HepG2 (cell line): ENCODE measurements at regions of chr1 and their contacts with region 1.

Region 1: DNA sequence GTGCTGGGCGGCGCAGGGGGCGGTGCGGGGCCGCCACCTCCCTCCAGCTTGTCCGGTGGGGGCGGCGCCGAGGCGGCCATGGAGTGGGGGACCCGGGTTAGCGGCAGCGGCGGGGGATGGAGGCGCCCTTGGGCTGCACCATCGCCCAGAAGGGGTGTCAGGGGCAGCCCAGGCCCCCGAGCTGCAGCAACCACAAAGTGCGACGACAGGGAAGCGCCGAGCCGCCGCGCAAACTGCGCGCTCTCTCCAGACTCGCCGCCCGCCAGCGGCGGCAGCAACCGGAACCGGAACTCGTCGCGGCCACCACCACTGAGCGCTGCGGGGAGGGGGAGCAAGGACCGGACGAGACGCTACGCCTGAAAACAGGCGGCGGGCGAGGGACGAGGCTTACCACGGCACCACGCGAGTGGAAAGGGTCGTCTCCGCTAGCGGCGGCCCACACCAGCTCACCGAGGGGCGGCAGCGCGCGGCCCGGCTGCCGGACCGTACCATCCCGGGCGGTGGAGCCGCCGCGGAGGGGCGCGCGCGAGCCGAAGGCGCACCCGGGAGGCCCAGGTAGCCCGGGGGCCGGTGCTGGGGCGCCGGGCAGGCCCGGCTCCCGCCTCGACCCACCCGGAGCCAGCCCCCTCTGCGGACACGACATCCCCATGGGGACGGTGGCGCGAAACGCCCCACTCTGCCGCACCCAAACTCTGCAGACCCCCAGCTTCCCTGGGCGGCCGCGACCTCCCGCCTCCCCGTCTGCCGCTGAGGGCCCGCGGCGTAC is at the start of gene PYGO2:
- DNase-seq: peak; percentile 48
- ATAC-seq: peak; percentile 87
- H3K4me3 ChIP-seq: peak within 1 kb of the TSS; percentile 72 to 87 (median 80)
- H3K27ac ChIP-seq: peak within 1 kb of the TSS; percentile 96
- H3K4me1 ChIP-seq: peaks cover 48% of the 10 kb centered on the region
- H3K27me3 ChIP-seq: no peaks in the 10 kb centered on the region; a peak in 1 of 5 replicates
- CTCF ChIP-seq: peak; percentile 75
- EP300 ChIP-seq: 0 out of 4 replicates have a peak, but pooled peaks of 1 of the 2 experiments have one; percentile 3
- POLR2A ChIP-seq: peak; percentile 72 to 84
- RAD21 ChIP-seq: peak; percentile 95
- total RNA-seq, gene PYGO2: 20.3 and 21.3 TPM in 2 replicates

Region 2: DNA sequence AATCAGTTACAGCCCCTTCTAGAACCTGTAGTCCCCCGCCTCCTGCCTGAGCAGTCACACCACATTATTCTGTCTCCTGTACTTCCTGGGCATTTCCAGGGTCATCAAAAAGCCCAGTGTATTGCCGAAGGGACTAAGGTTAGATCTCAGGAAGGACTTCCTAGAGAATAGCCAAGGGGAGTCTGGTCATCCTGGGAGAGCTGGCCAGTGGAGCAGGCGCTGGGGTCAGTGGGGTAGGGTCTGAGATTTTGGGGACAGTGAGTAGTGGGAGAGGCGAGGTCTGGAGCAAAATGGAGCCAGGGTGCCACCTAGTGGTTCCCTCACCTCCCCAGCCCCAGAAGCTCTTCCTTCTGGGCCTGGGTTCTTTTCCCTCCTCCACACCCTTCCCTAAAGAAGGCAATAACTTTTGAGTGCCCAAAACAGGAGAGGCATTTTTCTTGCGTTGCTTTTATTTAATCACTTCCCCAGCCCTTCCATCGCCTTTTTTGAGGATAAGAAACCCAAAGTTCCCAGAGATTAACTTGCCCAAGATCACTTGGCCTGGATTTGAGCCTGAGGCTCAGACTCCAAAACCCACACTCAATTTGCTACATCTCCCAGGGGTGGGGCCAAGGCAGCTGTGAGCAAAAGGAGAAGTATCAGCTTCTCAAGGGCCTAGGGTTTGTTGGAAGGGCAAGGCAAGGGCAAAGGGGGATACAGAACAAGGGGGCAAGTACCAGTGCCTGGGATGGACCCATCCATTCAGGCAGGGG is 17.9 kb before region 1 on chr1:
- CTCF ChIA-PET with region 1: no interaction called
- POLR2A ChIA-PET with region 1: interaction called, 22 read pairs
- in situ Hi-C with region 1: no loop called
- intact Hi-C with region 1: no loop called
- DNase-seq: no peak
- ATAC-seq: peak; percentile 14; the same call in 1 of the 3 replicates
- H3K4me3 ChIP-seq: peak overlapping the region in 1 of 3 experiments; percentile 27; a peak in 2 of 6 replicates
- H3K27ac ChIP-seq: peak overlapping the region; percentile 88
- H3K4me1 ChIP-seq: peaks cover 71% of the 10 kb centered on the region
- H3K27me3 ChIP-seq: no peaks in the 10 kb centered on the region
- CTCF ChIP-seq: peak; percentile 85
- EP300 ChIP-seq: no peak
- POLR2A ChIP-seq: no peak
- RAD21 ChIP-seq: peak; percentile 76